Transverse colon (tissue), 4 donors: ENCODE measurements at regions of chr2 and their contacts with region 1.

Region 1: DNA sequence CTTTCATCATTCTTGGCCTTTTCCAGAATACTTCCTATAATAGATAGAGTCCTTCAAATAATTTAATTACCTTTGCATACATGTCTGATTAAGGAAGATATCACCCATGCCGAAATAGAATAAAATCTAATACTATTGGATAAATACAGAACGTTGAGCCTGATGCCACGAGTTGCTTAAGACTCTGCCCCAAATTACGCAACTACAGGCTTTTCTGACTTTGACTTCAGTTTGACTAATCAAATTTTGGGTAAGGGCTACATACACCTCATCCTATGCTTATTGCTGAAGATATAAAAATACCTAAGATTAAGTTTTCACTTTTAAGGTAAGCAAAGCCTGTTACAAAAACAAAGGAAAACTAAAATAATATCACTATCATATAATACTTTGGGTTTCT is 1065.1 kb upstream of the NRXN1 start:
- DNase-seq: no peak
- H3K4me3 ChIP-seq: no peak overlapping the region
- H3K27ac ChIP-seq: no peak overlapping the region
- H3K4me1 ChIP-seq: no peaks in the 10 kb centered on the region
- H3K27me3 ChIP-seq: no peaks in the 10 kb centered on the region
- CTCF ChIP-seq: no peak
- EP300 ChIP-seq: no peak
- POLR2A ChIP-seq: no peak

Region 2: GRCh38 chr2:52074130-52074719 is 22.9 kb before region 1 on chr2:
- in situ Hi-C with region 1: no loop called
- intact Hi-C with region 1: no loop called
- DNase-seq: no peak
- H3K4me3 ChIP-seq: no peak overlapping the region
- H3K27ac ChIP-seq: no peak overlapping the region
- H3K4me1 ChIP-seq: no peaks in the 10 kb centered on the region
- H3K27me3 ChIP-seq: no peaks in the 10 kb centered on the region
- CTCF ChIP-seq: no peak
- EP300 ChIP-seq: no peak
- POLR2A ChIP-seq: no peak

Region 3: GRCh38 chr2:52135235-52135634 is 38.2 kb after region 1 on chr2:
- in situ Hi-C with region 1: no loop called
- intact Hi-C with region 1: loop called (anchors 2 kb)
- DNase-seq: no peak
- H3K4me3 ChIP-seq: no peak overlapping the region
- H3K27ac ChIP-seq: no peak overlapping the region
- H3K4me1 ChIP-seq: no peaks in the 10 kb centered on the region
- H3K27me3 ChIP-seq: no peaks in the 10 kb centered on the region
- CTCF ChIP-seq: no peak
- EP300 ChIP-seq: no peak
- POLR2A ChIP-seq: no peak

Region 4: DNA sequence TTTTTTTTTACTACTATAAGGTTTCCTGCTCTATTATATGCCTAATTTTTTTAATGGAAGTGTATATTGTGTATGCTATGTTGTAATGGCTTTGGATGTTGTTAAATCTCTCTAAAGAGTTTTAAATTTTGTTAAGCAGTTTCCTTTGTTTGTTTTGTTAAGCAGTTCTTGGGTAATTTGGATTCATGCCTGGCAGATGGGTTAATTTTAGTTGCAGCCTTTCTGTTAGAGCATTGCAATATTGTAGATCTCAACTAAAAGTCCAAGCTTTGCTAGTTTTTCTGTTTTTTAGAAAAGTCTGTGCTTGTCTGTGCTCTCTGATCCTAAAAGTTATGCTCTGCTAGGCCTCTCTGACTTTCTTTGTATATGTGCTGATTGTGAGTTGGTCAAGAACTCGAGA is 163.8 kb after region 1 on chr2:
- in situ Hi-C with region 1: no loop called
- intact Hi-C with region 1: no loop called
- DNase-seq: no peak
- H3K4me3 ChIP-seq: no peak overlapping the region
- H3K27ac ChIP-seq: no peak overlapping the region
- H3K4me1 ChIP-seq: no peaks in the 10 kb centered on the region
- H3K27me3 ChIP-seq: no peaks in the 10 kb centered on the region
- CTCF ChIP-seq: no peak
- EP300 ChIP-seq: no peak
- POLR2A ChIP-seq: no peak

Region 5: DNA sequence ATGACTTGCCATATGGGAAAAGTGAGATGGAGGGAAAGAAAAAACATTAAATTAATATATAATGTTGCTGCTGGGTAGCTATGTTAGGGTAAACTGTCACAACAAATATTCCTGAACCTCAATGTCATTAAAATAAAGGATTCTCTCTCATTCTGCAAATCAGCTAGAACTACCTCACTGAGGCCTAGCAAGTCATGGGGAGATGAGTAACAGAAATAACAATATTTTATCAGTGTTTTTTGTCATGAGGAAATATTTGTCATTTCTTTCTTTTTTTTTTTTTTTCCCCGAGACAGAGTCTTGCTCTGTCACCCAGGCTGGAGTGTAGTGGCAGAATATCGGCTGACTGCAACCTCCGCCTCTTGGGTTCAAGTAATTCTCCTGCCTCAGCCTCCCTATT is 217.2 kb after region 1 on chr2:
- in situ Hi-C with region 1: no loop called
- intact Hi-C with region 1: no loop called
- DNase-seq: no peak
- H3K4me3 ChIP-seq: no peak overlapping the region
- H3K27ac ChIP-seq: no peak overlapping the region
- H3K4me1 ChIP-seq: no peaks in the 10 kb centered on the region
- H3K27me3 ChIP-seq: no peaks in the 10 kb centered on the region
- CTCF ChIP-seq: no peak
- EP300 ChIP-seq: no peak
- POLR2A ChIP-seq: no peak

Region 6: GRCh38 chr2:52698408-52698807 is 601.3 kb after region 1 on chr2:
- in situ Hi-C with region 1: no loop called
- intact Hi-C with region 1: no loop called
- DNase-seq: no peak
- H3K4me3 ChIP-seq: no peak overlapping the region
- H3K27ac ChIP-seq: no peak overlapping the region
- H3K4me1 ChIP-seq: no peaks in the 10 kb centered on the region
- H3K27me3 ChIP-seq: no peaks in the 10 kb centered on the region
- CTCF ChIP-seq: no peak
- EP300 ChIP-seq: no peak
- POLR2A ChIP-seq: no peak